ENCODE measurements at regions of chr15 and their contacts with region 1.

Region 1: DNA sequence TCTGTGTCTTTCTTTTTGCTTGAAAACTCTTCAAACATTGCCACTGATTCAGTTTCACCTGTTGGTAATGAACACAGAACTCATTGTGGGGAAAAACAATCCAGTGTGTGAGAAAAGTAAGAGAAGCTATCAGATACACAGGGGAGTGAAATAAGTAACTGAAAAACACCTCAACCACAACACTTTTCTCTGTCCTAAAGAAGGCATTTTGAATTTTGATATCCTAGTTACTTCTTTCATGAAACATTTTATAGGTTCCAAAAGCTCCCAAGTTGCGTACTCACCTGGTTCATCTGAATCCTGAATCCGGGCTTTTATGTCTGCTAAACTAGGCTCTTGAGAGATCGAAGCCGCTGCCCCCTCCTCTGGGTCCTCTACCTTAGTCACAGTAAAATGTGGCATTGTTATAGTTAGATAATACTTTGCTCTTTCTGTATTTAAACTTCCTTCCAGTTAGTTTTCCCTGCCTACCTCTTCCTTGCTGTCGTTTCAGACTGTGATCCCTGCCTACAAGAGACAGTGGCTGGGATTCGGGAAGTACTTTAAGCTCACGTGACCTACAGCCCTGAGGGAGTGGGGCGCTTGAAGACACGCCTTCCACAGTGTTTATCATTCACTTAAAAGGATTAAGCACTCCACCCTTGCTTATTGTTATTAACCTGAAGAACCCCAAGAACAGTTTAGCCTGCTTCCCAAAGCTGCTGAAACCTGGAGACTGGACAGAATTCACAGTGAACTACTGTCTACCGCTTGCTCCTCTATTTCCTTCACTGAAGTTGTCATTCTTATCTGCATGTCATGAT is 19.1 kb downstream of the SLC12A6 start:
- DNase-seq: peak in 1 of 2 donors; percentile 80
- H3K4me3 ChIP-seq: peak overlapping the region; percentile 65 to 68
- H3K27ac ChIP-seq: peak overlapping the region; percentile 75 to 77
- H3K4me1 ChIP-seq: peaks cover 0 to 16% of the 10 kb centered on the region in 2 donors
- H3K27me3 ChIP-seq: no peaks in the 10 kb centered on the region
- CTCF ChIP-seq: no peak

Region 2: DNA sequence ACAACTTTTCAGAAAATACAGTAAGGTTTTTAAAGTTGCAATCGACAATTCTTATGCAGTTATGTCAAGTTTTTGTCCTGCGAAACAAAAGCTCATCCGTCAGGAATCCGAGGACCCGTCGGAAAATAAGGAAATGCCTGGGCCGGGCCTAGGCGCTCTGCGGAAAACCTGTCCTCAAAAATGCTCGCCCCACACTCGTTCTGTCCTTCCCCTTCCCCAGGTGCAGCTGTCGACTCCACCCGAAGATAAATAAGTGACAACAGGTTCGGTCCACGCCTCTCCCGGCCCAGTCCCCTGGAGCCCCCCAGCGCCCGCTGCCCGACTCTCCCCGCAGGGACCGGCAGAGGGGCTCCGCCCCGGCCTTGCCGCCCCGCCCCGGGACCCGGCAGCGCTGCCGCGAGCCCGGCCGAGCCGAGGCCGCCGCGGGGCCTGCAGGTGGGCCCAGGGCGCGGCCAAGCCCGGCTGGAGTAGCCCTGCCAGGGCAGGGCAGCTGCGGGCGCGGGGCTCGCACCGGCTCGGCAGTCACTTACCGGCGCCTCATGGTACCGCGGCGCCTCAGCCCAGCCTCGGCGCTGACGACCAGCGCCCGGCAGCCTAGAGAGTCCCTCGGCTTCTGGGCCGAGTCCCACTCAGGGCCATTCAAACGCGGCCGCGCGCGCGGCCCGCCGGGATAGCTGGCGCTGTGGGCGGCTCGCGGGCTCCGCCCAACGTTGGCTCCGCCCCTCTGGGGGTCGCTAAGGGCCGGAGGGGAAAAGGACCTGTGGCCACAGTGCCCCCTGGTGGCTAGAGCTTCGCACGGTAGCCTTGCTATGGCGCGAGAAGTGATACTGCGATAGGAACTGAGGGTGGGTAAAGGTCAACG is 108.8 kb before region 1 on chr15 and contains the start of gene KATNBL1:
- intact Hi-C with region 1: no loop called
- DNase-seq: peak; percentile 82 to 97
- H3K4me3 ChIP-seq: peak within 1 kb of the TSS; percentile 92
- H3K27ac ChIP-seq: peak within 1 kb of the TSS; percentile 80 to 86
- H3K4me1 ChIP-seq: peaks cover 0 to 10% of the 10 kb centered on the region in 2 donors
- H3K27me3 ChIP-seq: no peaks in the 10 kb centered on the region
- CTCF ChIP-seq: peak; percentile 85 to 94 (median 94)
- total RNA-seq, gene KATNBL1: 34.3 TPM

Region 3: DNA sequence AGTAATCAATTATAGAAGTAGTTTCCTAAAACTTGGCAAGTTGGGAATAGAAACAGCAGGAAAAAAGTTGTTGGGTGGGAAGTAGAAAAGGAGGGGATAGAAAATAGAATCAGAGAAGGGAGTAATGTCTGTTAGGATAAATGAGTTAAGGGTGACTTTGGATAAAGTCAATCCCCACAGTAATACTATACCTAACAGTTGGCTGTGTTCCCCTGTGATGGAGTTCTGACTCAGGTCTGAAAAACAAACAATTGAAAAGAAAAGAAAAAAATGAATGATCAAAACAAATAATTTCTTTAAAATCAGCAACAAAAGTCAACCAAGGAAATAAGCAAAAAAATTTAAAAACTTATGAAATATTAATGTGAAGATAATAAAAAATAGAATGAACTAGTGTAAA is 43.3 kb before region 1 on chr15:
- intact Hi-C with region 1: loop called (anchors 5 kb)
- DNase-seq: no peak
- H3K4me3 ChIP-seq: no peak overlapping the region
- H3K27ac ChIP-seq: no peak overlapping the region
- H3K4me1 ChIP-seq: peaks cover 0 to 4% of the 10 kb centered on the region in 2 donors
- H3K27me3 ChIP-seq: no peaks in the 10 kb centered on the region
- CTCF ChIP-seq: no peak